HCT116 (cell line): ENCODE measurements at regions of chr20 and their contacts with region 1.

Region 1: DNA sequence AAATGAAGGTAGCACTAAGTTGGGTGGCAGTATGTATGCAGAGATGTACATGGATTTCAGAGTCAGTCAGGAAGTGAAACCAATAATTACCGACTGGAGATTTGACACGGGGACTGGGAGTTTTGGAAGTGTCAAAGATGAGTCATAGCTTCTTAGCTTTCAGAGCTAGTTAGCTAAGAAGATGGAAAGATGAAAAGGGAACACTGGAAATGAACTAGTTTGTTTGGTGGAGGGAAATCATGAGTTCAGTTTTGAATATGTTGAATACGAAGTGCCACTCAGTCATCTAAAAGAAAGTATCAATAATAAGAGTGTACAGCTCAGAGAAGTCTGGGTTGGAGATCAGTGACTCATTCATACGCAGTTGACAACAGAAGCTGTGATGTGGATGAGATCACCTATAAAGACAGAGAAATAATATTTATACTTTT is 7.5 kb downstream of the ESF1 start:
- DNase-seq: peak; percentile 6
- ATAC-seq: peak; percentile 49; the same call in 1 of the 2 replicates
- H3K4me3 ChIP-seq: no peak overlapping the region
- H3K27ac ChIP-seq: no peak overlapping the region
- H3K4me1 ChIP-seq: peaks cover 0 to 13% of the 10 kb centered on the region in 2 experiments; a peak in 2 of 4 replicates
- H3K27me3 ChIP-seq: no peaks in the 10 kb centered on the region
- CTCF ChIP-seq: no peak
- POLR2A ChIP-seq: no peak
- RAD21 ChIP-seq: no peak

Region 2: DNA sequence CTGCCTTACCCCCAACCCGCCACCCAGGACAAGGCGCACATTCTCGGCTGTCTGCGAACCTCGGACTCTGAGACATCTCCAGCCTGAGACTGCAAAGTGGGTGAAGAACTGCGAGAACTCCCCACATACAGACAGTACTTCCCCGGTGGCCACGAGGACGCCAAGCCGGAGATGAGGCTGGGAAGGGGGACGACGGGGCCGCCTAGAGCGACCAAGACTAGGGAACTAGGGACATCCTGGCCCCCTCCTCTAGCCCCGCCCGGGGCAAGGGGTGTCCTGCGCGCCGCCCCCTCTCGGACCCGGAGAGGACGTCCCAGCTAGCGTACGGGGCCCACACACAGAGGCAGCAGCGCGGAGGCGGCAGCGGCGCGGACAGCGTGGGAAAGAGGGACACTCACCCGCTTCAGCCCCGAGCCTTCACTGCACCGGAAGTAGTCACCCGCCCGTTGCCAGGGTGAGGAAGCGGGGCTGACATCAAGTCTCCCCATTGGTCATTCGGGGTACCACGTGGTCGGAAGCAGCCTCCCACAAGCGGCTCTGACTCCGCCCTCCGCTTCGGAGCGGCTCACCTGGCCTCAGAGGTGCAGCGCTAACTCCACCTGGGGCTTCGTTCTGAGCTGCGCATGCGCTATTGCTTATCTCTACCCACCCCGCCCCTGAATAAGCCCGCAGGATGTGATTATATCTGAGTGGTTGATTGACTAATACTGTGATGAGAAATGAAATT is 138.5 kb before region 1 on chr20 and contains the start of gene TASP1:
- CTCF ChIA-PET with region 1: no interaction called
- POLR2A ChIA-PET with region 1: no interaction called
- RAD21 ChIA-PET with region 1: no interaction called
- intact Hi-C with region 1: loop called (anchors 5 kb)
- DNase-seq: peak; percentile 97
- ATAC-seq: peak; percentile 98
- H3K4me3 ChIP-seq: peak within 1 kb of the TSS; percentile 95 to 96
- H3K27ac ChIP-seq: peak within 1 kb of the TSS; percentile 57
- H3K4me1 ChIP-seq: peaks cover 3 to 12% of the 10 kb centered on the region in 2 experiments; a peak in 3 of 4 replicates
- H3K27me3 ChIP-seq: no peaks in the 10 kb centered on the region
- CTCF ChIP-seq: no peak
- POLR2A ChIP-seq: peak; percentile 80
- RAD21 ChIP-seq: no peak
- total RNA-seq, gene TASP1: 19.1 TPM

Region 3: GRCh38 chr20:13717631-13718044 is 59.5 kb before region 1 on chr20:
- CTCF ChIA-PET with region 1: no interaction called
- POLR2A ChIA-PET with region 1: no interaction called
- RAD21 ChIA-PET with region 1: no interaction called
- intact Hi-C with region 1: no loop called
- DNase-seq: no peak
- ATAC-seq: no peak
- H3K4me3 ChIP-seq: no peak overlapping the region
- H3K27ac ChIP-seq: no peak overlapping the region
- H3K4me1 ChIP-seq: no peaks in the 10 kb centered on the region
- H3K27me3 ChIP-seq: no peaks in the 10 kb centered on the region
- CTCF ChIP-seq: no peak
- POLR2A ChIP-seq: no peak
- RAD21 ChIP-seq: no peak